PC-9 (cell line): ENCODE measurements at regions of chr7 and their contacts with region 1.

Region 1: DNA sequence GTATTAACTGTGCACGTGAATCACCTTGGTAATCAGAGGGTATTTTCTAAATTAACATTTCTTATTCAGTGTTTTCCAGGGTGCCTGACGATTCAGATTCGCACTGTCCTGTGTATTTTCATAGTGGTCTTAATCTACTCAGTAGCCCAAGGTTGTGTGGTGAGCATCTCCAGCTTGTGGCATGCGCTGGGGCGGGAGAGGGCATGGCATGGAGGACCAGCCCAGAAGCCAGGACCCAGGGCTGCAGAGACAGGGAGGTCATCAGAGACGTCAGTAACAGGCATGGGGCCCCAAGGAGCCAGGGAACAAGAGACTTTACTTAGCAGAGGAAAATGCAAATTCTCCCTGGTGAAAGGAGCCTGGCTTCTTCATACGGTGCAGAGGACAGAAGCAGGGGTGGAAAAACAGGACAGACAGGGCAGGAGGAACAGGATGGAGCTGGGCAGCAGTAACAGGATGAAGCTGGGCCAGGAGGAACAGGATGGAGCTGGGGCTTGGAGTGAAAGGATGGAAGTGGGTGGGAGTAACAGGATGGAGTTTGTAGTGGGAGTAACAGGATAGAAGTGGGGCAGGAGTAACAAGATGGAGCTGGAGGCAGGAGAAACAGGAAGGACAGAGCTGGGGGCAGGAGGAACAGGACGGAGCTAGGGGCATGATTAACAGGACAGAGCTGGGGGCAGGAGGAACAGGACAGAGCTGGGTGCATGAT is 110.9 kb downstream of the ADCY1 start:
- DNase-seq: no peak
- H3K4me3 ChIP-seq: no peak overlapping the region
- H3K27ac ChIP-seq: no peak overlapping the region
- H3K4me1 ChIP-seq: no peaks in the 10 kb centered on the region
- H3K27me3 ChIP-seq: peaks cover 83% of the 10 kb centered on the region
- CTCF ChIP-seq: no peak

Region 2: GRCh38 chr7:45643630-45644029 is 41.4 kb before region 1 on chr7:
- CTCF ChIA-PET with region 1: no interaction called
- POLR2A ChIA-PET with region 1: no interaction called
- intact Hi-C with region 1: no loop called
- DNase-seq: no peak
- H3K4me3 ChIP-seq: no peak overlapping the region
- H3K27ac ChIP-seq: no peak overlapping the region
- H3K4me1 ChIP-seq: no peaks in the 10 kb centered on the region
- H3K27me3 ChIP-seq: peaks cover 52% of the 10 kb centered on the region
- CTCF ChIP-seq: no peak

Region 3: GRCh38 chr7:47283507-47284131 is 1598.6 kb after region 1 on chr7:
- CTCF ChIA-PET with region 1: no interaction called
- POLR2A ChIA-PET with region 1: interaction called, 10 read pairs
- intact Hi-C with region 1: no loop called
- DNase-seq: peak in 1 of 2 experiments; percentile 49
- H3K4me3 ChIP-seq: no peak overlapping the region
- H3K27ac ChIP-seq: no peak overlapping the region
- H3K4me1 ChIP-seq: no peaks in the 10 kb centered on the region
- H3K27me3 ChIP-seq: no peaks in the 10 kb centered on the region
- CTCF ChIP-seq: no peak